ENCODE measurements at regions of chr16 and their contacts with region 1.

Region 1: GRCh38 chr16:68760671-68761275 is 23.7 kb downstream of the CDH1 start:
- DNase-seq: peak; percentile 37
- H3K4me3 Mint-ChIP-seq: peak overlapping the region; percentile 8
- H3K27ac Mint-ChIP-seq: peak overlapping the region; percentile 72
- H3K4me1 Mint-ChIP-seq: peaks cover 73% of the 10 kb centered on the region
- H3K27me3 Mint-ChIP-seq: no peaks in the 10 kb centered on the region

Region 2: DNA sequence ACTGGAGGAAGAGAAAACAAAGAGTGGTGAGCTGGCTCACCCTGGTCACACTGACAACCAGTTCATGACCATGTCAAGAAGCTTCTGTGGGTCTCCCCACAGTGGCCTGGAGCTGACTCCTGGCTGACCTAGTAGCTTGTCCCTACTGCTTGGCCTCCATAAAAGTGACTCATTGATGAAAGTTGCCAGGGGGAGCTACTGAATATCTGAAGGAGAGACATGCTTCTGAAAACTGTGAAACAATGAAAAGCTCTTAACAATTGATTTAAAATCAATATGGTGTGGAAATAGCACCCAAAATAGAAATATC is 334.5 kb before region 1 on chr16:
- intact Hi-C with region 1: no loop called
- DNase-seq: no peak
- H3K4me3 Mint-ChIP-seq: no peak overlapping the region
- H3K27ac Mint-ChIP-seq: no peak overlapping the region
- H3K4me1 Mint-ChIP-seq: no peaks in the 10 kb centered on the region
- H3K27me3 Mint-ChIP-seq: peaks cover 5% of the 10 kb centered on the region

Region 3: DNA sequence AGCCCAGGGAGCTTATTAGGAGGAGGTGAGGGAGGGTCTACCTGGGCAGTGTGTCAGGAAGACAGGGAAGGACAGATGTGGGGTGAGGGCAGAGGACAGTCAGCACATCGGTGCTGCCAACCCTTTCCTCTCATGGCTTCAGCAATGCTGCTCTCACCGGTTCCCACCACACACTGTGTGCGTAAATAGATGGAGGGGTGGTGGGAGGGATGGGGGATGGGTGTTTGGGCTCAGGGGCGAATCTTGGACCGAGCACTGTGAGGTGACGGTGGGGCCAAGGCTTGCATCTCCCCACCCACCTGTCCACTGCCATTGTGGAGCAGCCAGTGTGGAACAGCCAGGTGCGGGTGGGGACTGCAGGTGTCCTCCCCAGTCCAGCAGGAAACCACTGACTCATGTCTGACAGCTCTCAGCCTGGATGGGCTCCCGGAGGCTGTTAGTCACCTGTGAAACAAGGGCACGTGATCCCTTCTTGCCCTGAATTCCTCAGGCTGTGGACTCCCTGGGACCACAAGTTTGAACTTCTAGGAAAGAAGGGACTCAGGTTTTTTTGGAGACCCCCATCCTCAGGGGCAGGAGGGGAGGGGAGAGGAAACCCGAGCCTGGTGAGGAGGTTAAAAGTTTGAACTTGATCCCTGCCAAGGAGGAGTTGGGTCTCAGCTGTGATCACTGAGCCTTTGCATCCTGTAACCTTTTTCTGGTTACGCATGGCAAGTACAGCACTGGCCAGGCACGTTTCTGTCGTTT is 269.8 kb before region 1 on chr16:
- intact Hi-C with region 1: no loop called
- DNase-seq: no peak
- H3K4me3 Mint-ChIP-seq: no peak overlapping the region
- H3K27ac Mint-ChIP-seq: no peak overlapping the region
- H3K4me1 Mint-ChIP-seq: no peaks in the 10 kb centered on the region
- H3K27me3 Mint-ChIP-seq: peaks cover 13% of the 10 kb centered on the region

Region 4: GRCh38 chr16:68538880-68539701 is 221.7 kb before region 1 on chr16 and contains the start of gene ZFP90:
- intact Hi-C with region 1: loop called (anchors 1 kb)
- DNase-seq: peak; percentile 84
- H3K4me3 Mint-ChIP-seq: peak within 1 kb of the TSS; percentile 95
- H3K27ac Mint-ChIP-seq: peak within 1 kb of the TSS; percentile 96
- H3K4me1 Mint-ChIP-seq: peaks cover 14% of the 10 kb centered on the region
- H3K27me3 Mint-ChIP-seq: no peaks in the 10 kb centered on the region
- total RNA-seq, gene ZFP90: 19.3 and 21.9 TPM in 2 replicates

Region 5: GRCh38 chr16:68689925-68690324 is 70.8 kb before region 1 on chr16:
- intact Hi-C with region 1: no loop called
- DNase-seq: no peak
- H3K4me3 Mint-ChIP-seq: no peak overlapping the region
- H3K27ac Mint-ChIP-seq: no peak overlapping the region
- H3K4me1 Mint-ChIP-seq: no peaks in the 10 kb centered on the region
- H3K27me3 Mint-ChIP-seq: peaks cover 3% of the 10 kb centered on the region

Region 6: GRCh38 chr16:68719993-68720489 is 40.7 kb before region 1 on chr16:
- intact Hi-C with region 1: loop called (anchors 1 kb)
- DNase-seq: peak; percentile 7
- H3K4me3 Mint-ChIP-seq: no peak overlapping the region
- H3K27ac Mint-ChIP-seq: peak overlapping the region; percentile 45
- H3K4me1 Mint-ChIP-seq: peaks cover 18% of the 10 kb centered on the region
- H3K27me3 Mint-ChIP-seq: no peaks in the 10 kb centered on the region

Region 7: GRCh38 chr16:68737046-68737729 is 23.6 kb before region 1 on chr16 and contains the start of gene CDH1:
- intact Hi-C with region 1: loop called (anchors 2 kb)
- DNase-seq: no peak
- H3K4me3 Mint-ChIP-seq: peak within 1 kb of the TSS; percentile 70
- H3K27ac Mint-ChIP-seq: peak within 1 kb of the TSS; percentile 65
- H3K4me1 Mint-ChIP-seq: peaks cover 7% of the 10 kb centered on the region
- H3K27me3 Mint-ChIP-seq: peaks cover 35% of the 10 kb centered on the region
- total RNA-seq, gene CDH1: 0.64 and 2.2 TPM in 2 replicates

Region 8: GRCh38 chr16:68776821-68777351 is 16.1 kb after region 1 on chr16:
- intact Hi-C with region 1: loop called (anchors 2 kb)
- DNase-seq: peak; percentile 42
- H3K4me3 Mint-ChIP-seq: no peak overlapping the region
- H3K27ac Mint-ChIP-seq: no peak overlapping the region
- H3K4me1 Mint-ChIP-seq: peaks cover 8% of the 10 kb centered on the region
- H3K27me3 Mint-ChIP-seq: peaks cover 34% of the 10 kb centered on the region

Region 9: DNA sequence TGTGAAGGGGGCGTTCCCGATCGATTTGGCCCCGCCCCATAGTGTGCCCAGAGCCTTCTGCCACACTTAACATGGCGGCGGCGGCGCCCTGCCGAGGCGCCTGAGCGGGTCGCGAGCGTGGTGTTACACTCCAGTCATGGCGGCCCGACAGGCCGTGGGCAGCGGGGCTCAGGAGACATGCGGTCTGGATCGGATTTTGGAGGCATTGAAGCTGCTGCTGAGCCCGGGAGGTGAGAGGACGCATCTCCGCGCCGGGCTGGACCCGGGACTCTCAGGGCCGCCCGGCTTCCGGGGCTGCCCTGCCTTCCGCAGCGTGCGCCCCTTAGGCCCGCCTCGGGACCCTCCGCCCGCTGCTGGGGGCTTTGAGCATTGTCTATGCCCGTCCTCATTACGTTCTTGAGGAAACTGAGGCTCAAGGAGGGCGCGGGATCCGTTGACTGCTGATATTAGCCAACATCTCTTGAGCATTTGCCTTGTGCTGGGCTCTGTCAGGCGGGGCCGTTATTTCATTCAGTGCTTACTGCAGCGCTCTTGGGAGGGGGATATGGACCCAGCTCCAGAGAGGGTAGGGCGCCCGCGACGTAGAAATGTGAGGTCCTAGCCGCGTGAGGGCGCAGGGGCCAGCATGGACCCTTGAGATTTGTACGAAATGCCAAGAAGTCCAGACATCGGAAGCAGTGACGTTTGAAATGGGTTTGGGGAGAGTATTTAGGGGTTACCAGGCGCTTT is 82.9 kb after region 1 on chr16 and contains the start of gene TANGO6:
- intact Hi-C with region 1: loop called (anchors 1 kb)
- DNase-seq: peak; percentile 87
- H3K4me3 Mint-ChIP-seq: peak within 1 kb of the TSS; percentile 94
- H3K27ac Mint-ChIP-seq: peak within 1 kb of the TSS; percentile 94
- H3K4me1 Mint-ChIP-seq: peaks cover 24% of the 10 kb centered on the region
- H3K27me3 Mint-ChIP-seq: no peaks in the 10 kb centered on the region
- total RNA-seq, gene TANGO6: 34.1 and 35.5 TPM in 2 replicates

Region 10: DNA sequence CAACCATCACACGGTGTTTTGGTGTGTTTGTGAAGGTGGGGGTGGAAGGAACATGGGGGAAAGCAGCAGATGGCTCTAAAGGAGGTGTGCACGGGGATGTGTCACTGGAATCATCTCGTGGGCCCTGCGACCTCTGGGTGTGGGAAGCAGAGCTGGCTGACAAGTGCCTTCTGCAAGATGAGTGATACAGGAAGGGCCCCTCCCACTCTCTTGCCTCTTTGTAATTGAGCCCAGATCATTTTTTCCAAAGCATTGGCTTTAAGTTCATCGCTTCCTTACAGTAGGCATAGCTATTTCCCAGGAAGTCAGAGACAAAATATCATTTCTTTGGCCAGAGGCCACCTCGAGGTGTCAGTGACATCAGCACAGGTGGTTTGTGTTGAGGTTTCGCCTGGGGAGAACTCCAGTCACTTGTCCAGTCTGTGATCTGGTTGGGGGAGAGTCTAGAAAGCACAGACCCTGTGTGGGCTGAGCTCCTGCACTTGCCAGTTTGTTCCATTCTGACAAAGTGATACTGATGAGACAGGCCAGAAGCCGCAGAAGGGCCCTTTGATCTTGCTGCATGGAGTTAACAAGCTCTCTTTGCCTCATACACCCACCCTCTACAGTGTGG is 405.6 kb after region 1 on chr16:
- intact Hi-C with region 1: loop called (anchors 1 kb)
- DNase-seq: peak; percentile 46
- H3K4me3 Mint-ChIP-seq: peak overlapping the region; percentile 69
- H3K27ac Mint-ChIP-seq: peak overlapping the region; percentile 89
- H3K4me1 Mint-ChIP-seq: peaks cover 49% of the 10 kb centered on the region
- H3K27me3 Mint-ChIP-seq: no peaks in the 10 kb centered on the region

Measured in activated T-helper 1 cell treated with anti-CD3 and anti-CD28 coated beads, Interleukin-12 subunit alpha, Interleukin-12 subunit beta, Interleukin-2, Interleukin-4 antibody, amounts not matched to agents 30 ng/mL and 10 ng/mL and 1 ng/mL, durations not matched to agents 14 hours and 24 hours and 36 hours (primary cell).